ENCODE measurements at regions of chr2 and their contacts with region 1.

Region 1: GRCh38 chr2:68709421-68709911 is 25.1 kb upstream of the ARHGAP25 start:
- DNase-seq: peak; percentile 79
- ATAC-seq: peak; percentile 88
- H3K4me3 ChIP-seq: peak overlapping the region; percentile 7; the same call in 1 of the 2 replicates
- H3K27ac ChIP-seq: no peak overlapping the region
- H3K4me1 ChIP-seq: no peaks in the 10 kb centered on the region; the same call in 1 of the 2 replicates
- H3K27me3 ChIP-seq: peaks cover 14% of the 10 kb centered on the region; the same call in 1 of the 2 replicates
- CTCF ChIP-seq: peak; percentile 85

Region 2: DNA sequence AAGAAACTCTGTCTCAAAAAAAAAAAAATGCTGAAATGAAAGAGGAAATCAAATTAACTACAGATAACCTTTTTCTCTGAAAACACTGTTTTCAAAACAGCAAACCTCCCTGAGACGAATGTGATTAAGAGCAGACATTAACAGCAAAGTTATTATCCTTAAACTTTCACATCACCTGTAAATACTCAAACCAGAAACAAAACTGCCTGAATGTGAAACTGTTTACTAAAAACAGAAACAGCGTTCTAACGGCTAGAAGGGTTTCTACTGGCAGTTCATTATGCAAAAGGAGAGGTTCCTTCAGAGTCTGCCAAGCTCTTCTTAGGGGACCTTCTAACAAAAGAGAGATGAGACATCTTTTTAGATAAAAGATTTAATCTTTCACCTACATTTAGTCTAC is 505.9 kb before region 1 on chr2:
- CTCF ChIA-PET with region 1: no interaction called
- POLR2A ChIA-PET with region 1: no interaction called
- intact Hi-C with region 1: no loop called
- DNase-seq: no peak
- ATAC-seq: no peak
- H3K4me3 ChIP-seq: no peak overlapping the region
- H3K27ac ChIP-seq: no peak overlapping the region
- H3K4me1 ChIP-seq: no peaks in the 10 kb centered on the region
- H3K27me3 ChIP-seq: no peaks in the 10 kb centered on the region
- CTCF ChIP-seq: no peak

Region 3: DNA sequence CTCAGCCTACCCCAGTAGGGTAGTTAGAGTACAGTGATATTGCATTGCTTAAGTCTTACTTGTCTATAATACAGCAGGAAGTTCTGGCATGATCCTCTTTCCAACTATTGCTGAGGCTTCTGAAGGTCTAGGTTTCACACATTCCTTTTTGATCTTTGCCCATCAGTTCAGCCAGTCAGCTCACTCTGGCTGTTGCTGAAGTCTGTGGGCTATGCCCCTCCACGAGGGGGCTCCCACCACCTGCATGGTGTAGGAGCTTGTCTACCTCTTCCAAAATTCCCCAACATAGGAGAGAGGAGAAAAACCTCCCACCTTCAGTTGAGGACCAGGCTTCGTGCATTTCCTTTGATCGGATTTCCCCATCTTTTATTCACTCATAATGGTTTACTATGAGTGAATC is 39.8 kb before region 1 on chr2:
- CTCF ChIA-PET with region 1: no interaction called
- POLR2A ChIA-PET with region 1: no interaction called
- intact Hi-C with region 1: no loop called
- DNase-seq: no peak
- ATAC-seq: no peak
- H3K4me3 ChIP-seq: no peak overlapping the region
- H3K27ac ChIP-seq: no peak overlapping the region
- H3K4me1 ChIP-seq: no peaks in the 10 kb centered on the region
- H3K27me3 ChIP-seq: no peaks in the 10 kb centered on the region
- CTCF ChIP-seq: no peak

Region 4: GRCh38 chr2:68689553-68690537 is 19.6 kb before region 1 on chr2:
- CTCF ChIA-PET with region 1: no interaction called
- POLR2A ChIA-PET with region 1: no interaction called
- intact Hi-C with region 1: no loop called
- DNase-seq: no peak
- ATAC-seq: no peak
- H3K4me3 ChIP-seq: no peak overlapping the region
- H3K27ac ChIP-seq: no peak overlapping the region
- H3K4me1 ChIP-seq: no peaks in the 10 kb centered on the region
- H3K27me3 ChIP-seq: no peaks in the 10 kb centered on the region
- CTCF ChIP-seq: no peak

Region 5: GRCh38 chr2:68734688-68735525 is 25.4 kb after region 1 on chr2 and contains the start of gene ARHGAP25:
- CTCF ChIA-PET with region 1: no interaction called
- POLR2A ChIA-PET with region 1: no interaction called
- intact Hi-C with region 1: no loop called
- DNase-seq: no peak
- ATAC-seq: no peak
- H3K4me3 ChIP-seq: no peak within 1 kb of the TSS
- H3K27ac ChIP-seq: no peak within 1 kb of the TSS
- H3K4me1 ChIP-seq: peaks cover 16% of the 10 kb centered on the region
- H3K27me3 ChIP-seq: no peaks in the 10 kb centered on the region
- CTCF ChIP-seq: no peak
- total RNA-seq, gene ARHGAP25: not detected in 2 replicates

Region 6: GRCh38 chr2:68909793-68910674 is 200.6 kb after region 1 on chr2:
- CTCF ChIA-PET with region 1: interaction called, 5 read pairs
- POLR2A ChIA-PET with region 1: no interaction called
- intact Hi-C with region 1: loop called (anchors 1 kb)
- DNase-seq: peak; percentile 88
- ATAC-seq: no peak
- H3K4me3 ChIP-seq: no peak overlapping the region
- H3K27ac ChIP-seq: no peak overlapping the region
- H3K4me1 ChIP-seq: peaks cover 29% of the 10 kb centered on the region
- H3K27me3 ChIP-seq: no peaks in the 10 kb centered on the region
- CTCF ChIP-seq: peak; percentile 89

Region 7: GRCh38 chr2:68925295-68925896 is 215.9 kb after region 1 on chr2:
- CTCF ChIA-PET with region 1: interaction called, 19 read pairs
- POLR2A ChIA-PET with region 1: no interaction called
- intact Hi-C with region 1: loop called (anchors 1 kb)
- DNase-seq: peak; percentile 81
- ATAC-seq: peak; percentile 84
- H3K4me3 ChIP-seq: no peak overlapping the region
- H3K27ac ChIP-seq: no peak overlapping the region
- H3K4me1 ChIP-seq: no peaks in the 10 kb centered on the region; the same call in 1 of the 2 replicates
- H3K27me3 ChIP-seq: no peaks in the 10 kb centered on the region
- CTCF ChIP-seq: peak; percentile 93

Measured in PC-3 (cell line).